ENCODE measurements at regions of chr4 and their contacts with region 1.

Region 1: GRCh38 chr4:149897783-149898182 is 82.1 kb upstream of the IQCM start:
- DNase-seq: no peak
- H3K4me3 Mint-ChIP-seq: no peak overlapping the region
- H3K27ac Mint-ChIP-seq: no peak overlapping the region
- H3K4me1 Mint-ChIP-seq: no peaks in the 10 kb centered on the region
- H3K27me3 Mint-ChIP-seq: no peaks in the 10 kb centered on the region
- CTCF ChIP-seq: no peak

Region 2: GRCh38 chr4:149264093-149264733 is 633.6 kb before region 1 on chr4:
- CTCF ChIA-PET with region 1: no interaction called
- intact Hi-C with region 1: loop called (anchors 10 kb)
- DNase-seq: peak; percentile 30
- H3K4me3 Mint-ChIP-seq: no peak overlapping the region
- H3K27ac Mint-ChIP-seq: no peak overlapping the region
- H3K4me1 Mint-ChIP-seq: no peaks in the 10 kb centered on the region
- H3K27me3 Mint-ChIP-seq: no peaks in the 10 kb centered on the region
- CTCF ChIP-seq: no peak

Region 3: GRCh38 chr4:149370785-149371420 is 526.9 kb before region 1 on chr4:
- CTCF ChIA-PET with region 1: interaction called, 3 read pairs
- intact Hi-C with region 1: loop called (anchors 1 kb)
- DNase-seq: peak; percentile 17
- H3K4me3 Mint-ChIP-seq: no peak overlapping the region
- H3K27ac Mint-ChIP-seq: no peak overlapping the region
- H3K4me1 Mint-ChIP-seq: no peaks in the 10 kb centered on the region
- H3K27me3 Mint-ChIP-seq: no peaks in the 10 kb centered on the region
- CTCF ChIP-seq: peak; percentile 18

Region 4: DNA sequence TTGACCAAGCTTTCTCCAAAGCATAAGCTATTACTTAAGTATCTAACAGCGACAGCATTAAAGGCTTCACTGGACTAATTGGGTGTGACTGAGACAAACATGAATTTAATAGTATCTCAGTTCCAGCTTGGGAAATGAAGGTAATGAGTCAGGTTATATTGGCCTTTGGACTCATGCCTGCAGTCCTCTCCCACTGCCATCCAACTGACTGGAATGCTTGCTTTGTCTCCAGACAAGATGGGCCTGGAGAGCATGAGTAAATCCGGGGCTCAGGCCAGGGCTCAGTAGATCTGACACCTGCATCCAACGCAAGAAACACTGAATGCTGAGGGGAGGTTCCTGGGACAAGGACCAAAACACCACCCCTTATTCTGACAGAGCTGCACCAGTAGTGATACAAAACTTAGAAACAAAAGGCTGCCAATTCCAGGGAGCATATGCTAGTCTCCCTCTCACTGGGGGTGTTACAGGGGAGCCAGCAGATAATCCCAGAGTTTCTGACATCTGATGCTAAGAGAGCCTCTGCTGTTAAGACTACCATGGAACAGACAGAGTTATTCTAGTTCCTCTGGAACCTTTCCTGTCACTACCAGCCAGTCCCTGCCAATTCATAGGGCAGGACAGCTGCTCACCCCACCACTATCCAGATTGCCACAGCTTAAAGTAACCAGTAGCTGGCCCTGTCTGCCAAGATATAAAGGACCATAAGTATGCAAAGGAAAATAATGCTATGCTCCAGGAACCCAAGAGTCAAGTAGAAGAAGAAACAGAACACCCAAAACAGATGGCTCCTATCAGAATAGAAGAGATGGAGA is 376.0 kb before region 1 on chr4:
- CTCF ChIA-PET with region 1: no interaction called
- intact Hi-C with region 1: loop called (anchors 10 kb)
- DNase-seq: no peak
- H3K4me3 Mint-ChIP-seq: no peak overlapping the region
- H3K27ac Mint-ChIP-seq: no peak overlapping the region
- H3K4me1 Mint-ChIP-seq: no peaks in the 10 kb centered on the region
- H3K27me3 Mint-ChIP-seq: no peaks in the 10 kb centered on the region
- CTCF ChIP-seq: no peak

Region 5: DNA sequence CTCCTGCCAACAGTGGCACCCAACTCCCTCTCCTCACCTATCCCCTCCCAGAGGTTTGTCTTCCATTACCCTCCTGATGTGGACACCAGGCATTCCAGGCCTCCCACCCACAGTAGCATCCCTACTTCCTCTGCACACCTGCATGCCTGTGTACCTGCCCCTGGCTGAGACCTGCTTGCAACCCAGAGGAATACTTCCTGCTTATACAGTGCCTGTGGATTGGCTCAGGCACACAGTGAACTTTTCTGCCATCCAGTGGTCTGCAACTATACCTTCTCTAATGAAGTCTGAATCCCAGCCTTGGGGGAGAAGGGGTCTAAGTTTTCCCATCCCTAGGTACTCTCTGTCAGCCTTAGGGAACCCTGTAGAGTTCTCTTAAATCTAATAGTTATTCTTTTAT is 252.0 kb before region 1 on chr4:
- CTCF ChIA-PET with region 1: no interaction called
- intact Hi-C with region 1: loop called (anchors 5 kb)
- DNase-seq: no peak
- H3K4me3 Mint-ChIP-seq: no peak overlapping the region
- H3K27ac Mint-ChIP-seq: no peak overlapping the region
- H3K4me1 Mint-ChIP-seq: no peaks in the 10 kb centered on the region
- H3K27me3 Mint-ChIP-seq: no peaks in the 10 kb centered on the region
- CTCF ChIP-seq: no peak

Region 6: DNA sequence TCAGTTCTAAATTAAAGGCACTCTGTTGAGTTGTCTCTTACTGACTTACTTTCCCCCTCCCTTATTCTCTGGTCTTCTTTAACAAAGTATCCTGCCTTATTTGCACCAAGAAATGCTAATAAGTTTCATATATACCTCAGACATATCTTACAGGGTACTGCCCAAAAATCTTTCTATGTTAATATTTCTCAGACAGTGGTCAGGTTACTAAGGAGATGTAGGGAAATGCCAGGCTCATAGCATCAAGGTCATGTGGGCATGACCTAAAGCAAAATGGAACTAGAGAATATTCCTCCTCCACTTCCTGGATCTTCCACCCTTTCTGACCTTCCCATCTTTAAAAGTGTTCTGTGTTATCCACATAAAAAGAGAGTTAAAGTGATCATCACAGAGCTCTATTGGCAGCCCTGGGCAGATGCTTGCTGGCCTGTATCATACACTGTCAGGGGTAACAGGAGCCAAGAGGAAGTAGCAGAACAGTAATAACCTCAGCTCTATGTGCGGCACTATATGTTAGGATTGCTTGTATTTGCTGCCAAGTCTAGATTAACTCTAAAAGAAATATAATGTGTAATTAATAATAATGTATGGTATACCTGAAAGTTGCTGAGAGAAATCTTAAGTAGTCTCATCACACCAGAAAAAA is 156.5 kb before region 1 on chr4:
- CTCF ChIA-PET with region 1: no interaction called
- intact Hi-C with region 1: loop called (anchors 10 kb)
- DNase-seq: no peak
- H3K4me3 Mint-ChIP-seq: no peak overlapping the region
- H3K27ac Mint-ChIP-seq: no peak overlapping the region
- H3K4me1 Mint-ChIP-seq: peaks cover 13% of the 10 kb centered on the region
- H3K27me3 Mint-ChIP-seq: no peaks in the 10 kb centered on the region
- CTCF ChIP-seq: no peak

Region 7: GRCh38 chr4:149815743-149816142 is 82.0 kb before region 1 on chr4 and contains the start of gene IQCM:
- CTCF ChIA-PET with region 1: no interaction called
- intact Hi-C with region 1: no loop called
- DNase-seq: no peak
- H3K4me3 Mint-ChIP-seq: no peak within 1 kb of the TSS
- H3K27ac Mint-ChIP-seq: no peak within 1 kb of the TSS
- H3K4me1 Mint-ChIP-seq: peaks cover 8% of the 10 kb centered on the region
- H3K27me3 Mint-ChIP-seq: no peaks in the 10 kb centered on the region
- CTCF ChIP-seq: no peak
- total RNA-seq, gene IQCM: not detected in 2 replicates